ENCODE measurements at regions of chr18 and their contacts with region 1.

Region 1: GRCh38 chr18:2994603-2995432 is 18.1 kb downstream of the LPIN2 start:
- DNase-seq: no peak
- ATAC-seq: peak; percentile 93
- H3K4me3 ChIP-seq: no peak overlapping the region
- H3K27ac ChIP-seq: peak overlapping the region; percentile 53; the same call in 1 of the 2 replicates
- H3K4me1 ChIP-seq: peaks cover 33% of the 10 kb centered on the region
- H3K27me3 ChIP-seq: no peaks in the 10 kb centered on the region
- CTCF ChIP-seq: peak; percentile 69 to 71 (median 70)
- EP300 ChIP-seq: no peak
- POLR2A ChIP-seq: no peak
- RAD21 ChIP-seq: peak; percentile 84

Region 2: DNA sequence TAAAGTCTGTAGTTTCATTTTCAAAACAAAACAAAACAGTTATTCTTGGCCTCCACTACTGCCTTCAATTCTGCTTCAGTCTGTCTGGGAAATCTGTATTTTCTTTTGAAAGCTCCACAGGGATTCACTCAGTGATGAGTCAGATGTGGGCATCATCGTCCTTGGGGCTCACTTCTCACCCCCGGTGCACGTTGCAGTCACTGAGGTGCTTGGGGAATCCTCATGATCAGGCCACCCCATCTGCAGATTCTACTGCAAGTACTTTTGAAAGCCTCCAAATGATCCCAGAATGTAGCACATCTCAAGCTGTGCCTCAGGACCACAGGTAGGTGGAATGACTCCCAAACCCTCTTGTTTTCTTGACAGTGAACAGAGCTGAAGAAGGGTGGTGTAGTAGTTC is 16.2 kb before region 1 on chr18:
- CTCF ChIA-PET with region 1: interaction called, 285 read pairs
- POLR2A ChIA-PET with region 1: interaction called, 4 read pairs
- RAD21 ChIA-PET with region 1: interaction called, 47 read pairs
- SMC1A ChIA-PET with region 1: interaction called, 17 read pairs
- in situ Hi-C with region 1: no loop called
- intact Hi-C with region 1: no loop called
- DNase-seq: no peak
- ATAC-seq: peak; percentile 16
- H3K4me3 ChIP-seq: peak overlapping the region; percentile 41; the same call in 1 of the 2 replicates
- H3K27ac ChIP-seq: peak overlapping the region; percentile 70
- H3K4me1 ChIP-seq: peaks cover 41% of the 10 kb centered on the region
- H3K27me3 ChIP-seq: no peaks in the 10 kb centered on the region
- CTCF ChIP-seq: no peak
- EP300 ChIP-seq: no peak
- POLR2A ChIP-seq: no peak
- RAD21 ChIP-seq: no peak

Region 3: DNA sequence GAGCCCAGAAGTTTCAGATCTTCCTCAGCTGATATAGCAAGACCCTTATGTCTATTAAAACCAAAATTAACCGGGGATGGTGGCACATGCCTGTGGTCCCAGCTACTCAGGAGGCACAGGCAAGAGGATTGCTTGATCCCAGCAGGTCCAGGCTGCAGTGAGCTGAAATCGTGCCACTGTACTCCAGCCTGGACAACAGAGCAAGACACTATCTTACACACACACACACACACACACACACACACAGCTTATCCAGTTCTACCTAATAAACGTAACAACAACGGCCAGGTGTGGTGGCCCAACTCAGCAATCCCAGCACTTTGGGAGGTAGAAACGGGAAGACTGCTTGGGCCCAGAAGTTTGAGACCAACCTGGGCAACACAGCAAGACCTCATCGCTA is 10.6 kb after region 1 on chr18:
- CTCF ChIA-PET with region 1: interaction called, 11 read pairs
- POLR2A ChIA-PET with region 1: interaction called, 4 read pairs
- RAD21 ChIA-PET with region 1: interaction called, 10 read pairs
- SMC1A ChIA-PET with region 1: interaction called, 9 read pairs
- in situ Hi-C with region 1: no loop called
- intact Hi-C with region 1: no loop called
- DNase-seq: no peak
- ATAC-seq: no peak
- H3K4me3 ChIP-seq: no peak overlapping the region
- H3K27ac ChIP-seq: no peak overlapping the region
- H3K4me1 ChIP-seq: no peaks in the 10 kb centered on the region
- H3K27me3 ChIP-seq: no peaks in the 10 kb centered on the region
- CTCF ChIP-seq: no peak
- EP300 ChIP-seq: no peak
- POLR2A ChIP-seq: no peak
- RAD21 ChIP-seq: no peak

Region 4: DNA sequence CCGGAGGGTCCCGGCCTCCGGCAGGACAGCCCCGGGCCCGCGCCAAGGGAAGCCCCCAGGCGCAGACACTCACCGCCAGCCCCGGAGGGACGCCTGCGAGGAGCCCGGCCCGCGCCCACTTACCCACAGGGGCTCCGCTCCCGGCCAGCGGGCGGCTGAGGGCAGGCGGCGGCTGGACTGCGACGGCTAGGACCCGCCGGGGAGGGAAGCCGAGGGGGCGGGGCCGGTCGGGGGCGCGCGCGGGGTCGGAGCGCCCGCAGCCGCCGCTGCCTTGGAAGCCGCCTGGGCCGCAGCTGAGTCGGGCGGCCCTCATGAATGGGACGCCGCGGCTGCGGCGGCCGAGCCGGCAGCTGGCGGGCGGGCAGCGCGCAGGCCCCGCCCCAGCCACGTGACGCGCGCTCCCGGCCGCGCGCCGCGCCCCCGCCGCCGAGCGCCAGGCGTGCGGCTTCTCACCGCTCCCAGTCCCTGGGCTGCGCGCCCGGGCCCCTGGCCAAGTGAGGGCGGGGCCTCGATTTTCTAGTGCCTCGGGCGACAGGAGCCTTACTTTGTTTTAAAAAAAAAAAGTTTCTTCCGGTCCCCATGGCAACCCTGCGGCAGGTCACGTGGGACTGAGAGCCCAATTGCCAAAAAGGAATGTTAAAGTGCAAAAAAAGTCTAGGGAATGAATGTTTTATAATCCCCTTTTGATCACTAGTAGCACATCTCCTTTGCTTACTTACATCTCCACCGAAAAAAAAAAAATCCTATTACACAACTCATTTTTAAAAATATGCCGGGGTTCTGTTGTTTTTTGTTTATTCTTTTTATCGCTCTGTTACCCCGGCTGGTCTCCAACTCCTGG is 18.4 kb after region 1 on chr18 and contains the start of gene LPIN2:
- CTCF ChIA-PET with region 1: interaction called, 11 read pairs
- POLR2A ChIA-PET with region 1: interaction called, 4 read pairs
- RAD21 ChIA-PET with region 1: interaction called, 10 read pairs
- SMC1A ChIA-PET with region 1: interaction called, 9 read pairs
- in situ Hi-C with region 1: no loop called
- intact Hi-C with region 1: no loop called
- DNase-seq: peak; percentile 71
- ATAC-seq: peak; percentile 88
- H3K4me3 ChIP-seq: peak within 1 kb of the TSS; percentile 74
- H3K27ac ChIP-seq: peak within 1 kb of the TSS; percentile 71
- H3K4me1 ChIP-seq: peaks cover 14% of the 10 kb centered on the region
- H3K27me3 ChIP-seq: no peaks in the 10 kb centered on the region
- CTCF ChIP-seq: no peak
- EP300 ChIP-seq: peak in 1 of 2 experiments; percentile 44; a peak in 1 of 4 replicates
- POLR2A ChIP-seq: peak; percentile 61; the same call in 1 of the 2 replicates
- RAD21 ChIP-seq: no peak
- polyA plus RNA-seq, gene LPIN2: 4.1 to 4.5 TPM

Region 5: GRCh38 chr18:3129053-3129864 is 134.4 kb after region 1 on chr18:
- CTCF ChIA-PET with region 1: interaction called, 42 read pairs
- POLR2A ChIA-PET with region 1: interaction called, 6 read pairs
- RAD21 ChIA-PET with region 1: interaction called, 22 read pairs
- SMC1A ChIA-PET with region 1: interaction called, 21 read pairs
- in situ Hi-C with region 1: no loop called
- intact Hi-C with region 1: no loop called
- DNase-seq: no peak
- ATAC-seq: peak; percentile 100
- H3K4me3 ChIP-seq: no peak overlapping the region
- H3K27ac ChIP-seq: no peak overlapping the region
- H3K4me1 ChIP-seq: no peaks in the 10 kb centered on the region
- H3K27me3 ChIP-seq: no peaks in the 10 kb centered on the region
- CTCF ChIP-seq: peak; percentile 92 to 95 (median 95)
- EP300 ChIP-seq: no peak
- POLR2A ChIP-seq: no peak
- RAD21 ChIP-seq: peak; percentile 48